Right cardiac atrium (tissue), 5 donors: ENCODE measurements at regions of chr2 and their contacts with region 1.

Region 1: GRCh38 chr2:127591221-127591923 is 54.6 kb upstream of the GPR17 start:
- DNase-seq: peak; percentile 60 to 86 (median 80)
- ATAC-seq: peak; percentile 82 to 85
- H3K4me3 ChIP-seq: no peak overlapping the region
- H3K27ac ChIP-seq: no peak overlapping the region
- H3K4me1 ChIP-seq: no peaks in the 10 kb centered on the region
- H3K27me3 ChIP-seq: no peaks in the 10 kb centered on the region

Region 2: DNA sequence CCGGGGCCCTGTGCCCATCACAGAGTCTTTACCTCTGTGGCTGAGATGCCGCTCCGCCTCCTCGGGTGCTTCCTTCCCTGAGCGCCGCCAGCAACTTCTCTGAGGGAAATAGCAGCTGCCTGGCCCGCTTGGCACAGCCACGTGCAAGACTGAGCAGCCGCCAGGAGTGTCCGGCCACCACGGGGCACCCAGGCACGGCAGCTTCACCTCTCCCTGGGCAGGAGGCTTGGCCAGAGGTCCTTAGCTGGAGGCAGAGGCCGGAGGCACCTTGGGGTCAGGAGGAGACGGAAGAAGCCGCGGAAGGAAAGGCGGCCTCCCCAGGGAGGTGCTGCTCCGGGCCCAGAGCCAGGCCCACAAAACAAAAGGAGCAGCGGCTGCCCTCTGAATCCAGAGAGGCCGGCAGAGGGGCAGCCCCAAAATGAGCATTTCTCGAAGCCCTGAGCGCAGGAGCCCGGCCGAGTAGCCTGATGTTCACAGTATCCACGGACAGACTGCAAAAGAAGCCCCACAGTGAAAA is 90.0 kb after region 1 on chr2:
- intact Hi-C with region 1: loop called in 1 of 4 experiments (anchors 5 kb)
- DNase-seq: peak; percentile 60 to 88 (median 79)
- ATAC-seq: peak; percentile 57 to 73
- H3K4me3 ChIP-seq: peak overlapping the region; percentile 45
- H3K27ac ChIP-seq: peak overlapping the region; percentile 15
- H3K4me1 ChIP-seq: peaks cover 3% of the 10 kb centered on the region
- H3K27me3 ChIP-seq: no peaks in the 10 kb centered on the region

Region 3: DNA sequence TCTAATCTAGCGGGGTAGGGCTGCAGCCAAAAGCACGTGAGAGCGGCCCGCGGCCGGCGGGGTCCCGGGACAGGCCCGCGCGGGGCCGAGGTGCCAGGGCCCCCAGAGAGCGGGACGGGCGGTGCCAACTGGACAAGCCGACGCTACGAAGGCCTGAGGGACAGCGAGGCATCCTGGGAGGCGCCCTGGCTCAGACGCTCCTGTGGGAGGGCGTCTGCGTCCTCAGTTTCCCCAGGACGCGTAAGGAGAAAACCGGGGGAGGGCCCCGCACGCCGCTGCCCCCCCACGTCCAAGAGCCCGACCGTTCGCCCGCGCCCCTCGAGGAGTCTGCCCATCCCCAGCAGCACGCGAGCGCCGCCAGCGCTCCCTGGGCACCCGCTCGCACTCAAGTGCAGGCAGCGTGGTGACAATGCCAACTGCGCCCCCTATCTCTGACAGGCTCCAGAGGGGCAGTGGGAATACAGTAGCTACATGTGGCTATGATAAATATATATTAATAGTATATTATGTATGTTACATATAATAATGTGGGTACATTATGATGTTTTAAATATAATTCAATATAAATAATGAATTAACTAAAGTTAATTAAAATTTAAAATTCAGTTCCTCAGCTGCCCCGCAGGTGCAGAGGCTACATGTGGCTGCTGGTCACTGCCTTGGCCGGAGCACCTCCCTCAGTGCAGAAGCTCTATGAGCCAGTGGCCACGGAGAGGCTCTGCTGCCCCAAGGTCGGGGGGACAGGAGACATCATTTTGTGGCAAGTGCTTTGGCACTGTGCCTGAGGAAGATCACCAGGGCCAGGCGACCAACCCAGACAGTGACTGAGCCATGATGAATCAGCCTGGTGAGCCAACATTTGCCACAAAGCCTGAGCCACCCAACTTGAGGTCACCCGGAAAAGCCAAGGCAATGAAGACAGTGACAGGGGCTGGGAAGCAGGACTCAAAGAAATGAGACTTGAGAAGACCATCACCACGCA is 104.4 kb after region 1 on chr2:
- intact Hi-C with region 1: loop called in 3 of 4 experiments (anchors 5 to 10 kb)
- DNase-seq: peak; percentile 77 to 91 (median 79)
- ATAC-seq: peak; percentile 66 to 86
- H3K4me3 ChIP-seq: peak overlapping the region; percentile 29
- H3K27ac ChIP-seq: peak overlapping the region; percentile 63
- H3K4me1 ChIP-seq: peaks cover 5% of the 10 kb centered on the region
- H3K27me3 ChIP-seq: no peaks in the 10 kb centered on the region

Region 4: DNA sequence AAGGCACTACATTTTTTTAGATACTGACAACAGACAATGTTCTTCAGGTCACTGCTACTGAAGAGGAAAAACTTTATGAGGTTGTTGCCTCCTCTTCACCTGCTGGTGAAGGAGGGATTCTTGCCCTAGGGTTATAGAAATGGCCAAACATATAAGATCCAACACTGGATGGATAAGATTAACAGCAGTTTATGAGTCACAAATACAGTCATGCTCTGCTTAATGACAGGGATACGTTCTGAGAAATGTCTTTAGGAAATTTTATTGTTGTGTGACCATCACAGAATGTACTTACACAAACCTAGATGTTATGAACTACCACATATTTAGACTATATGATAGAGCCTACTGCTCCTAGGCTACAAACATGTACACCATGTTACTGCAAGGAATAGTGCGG is 351.8 kb after region 1 on chr2:
- intact Hi-C with region 1: loop called in 1 of 4 experiments (anchors 10 kb)
- DNase-seq: no peak
- ATAC-seq: no peak
- H3K4me3 ChIP-seq: no peak overlapping the region
- H3K27ac ChIP-seq: no peak overlapping the region
- H3K4me1 ChIP-seq: no peaks in the 10 kb centered on the region
- H3K27me3 ChIP-seq: no peaks in the 10 kb centered on the region